ENCODE measurements at regions of chr6 and their contacts with region 1.

Region 1: DNA sequence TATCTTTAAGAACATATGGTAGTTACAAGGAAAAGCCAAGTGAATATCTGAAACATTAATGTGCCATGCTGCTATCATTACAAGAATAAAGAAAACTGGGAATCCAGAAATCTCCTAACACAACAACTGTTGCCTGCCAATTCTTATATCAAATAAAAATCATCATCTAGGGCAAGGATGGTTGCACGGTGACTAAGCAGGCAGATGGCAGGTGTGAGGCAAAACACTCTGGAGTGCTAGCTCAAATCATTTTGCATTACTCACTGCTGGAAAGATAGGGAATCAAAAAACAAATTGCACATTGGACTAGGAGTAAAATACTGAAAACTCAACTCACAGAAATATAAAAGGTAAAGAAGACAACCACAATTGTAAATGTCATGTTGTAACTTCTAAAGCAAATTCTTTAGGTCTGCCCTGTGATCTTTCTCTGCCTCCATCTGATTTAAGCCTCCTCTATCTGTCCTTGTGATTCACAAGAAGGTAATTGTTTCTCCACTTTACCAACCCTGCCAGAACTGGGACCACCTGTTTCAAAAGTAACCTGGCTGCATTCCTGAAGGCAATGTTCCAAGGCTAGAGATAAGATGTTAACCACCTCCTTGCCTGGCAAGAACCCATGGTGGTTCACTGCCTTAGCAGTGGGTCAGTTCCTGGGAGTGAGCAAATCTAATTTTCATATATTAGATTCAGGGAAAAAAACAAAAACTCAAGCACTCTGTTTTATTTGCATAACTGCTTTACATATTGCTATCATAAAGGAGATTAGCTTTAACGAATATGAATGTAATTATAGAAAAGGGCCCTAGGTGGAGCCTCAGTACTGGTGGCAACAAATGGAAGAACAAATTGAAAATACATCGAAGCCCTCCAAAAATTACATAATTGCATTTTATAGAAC is 33.1 kb upstream of the LCA5 start:
- DNase-seq: no peak
- ATAC-seq: peak; percentile 91
- H3K4me3 ChIP-seq: peak overlapping the region; percentile 1 to 18; a peak in 2 of 4 replicates
- H3K27ac ChIP-seq: peak overlapping the region; percentile 84
- H3K4me1 ChIP-seq: peaks cover 17% of the 10 kb centered on the region
- H3K27me3 ChIP-seq: no peaks in the 10 kb centered on the region
- CTCF ChIP-seq: peak; percentile 80

Region 2: DNA sequence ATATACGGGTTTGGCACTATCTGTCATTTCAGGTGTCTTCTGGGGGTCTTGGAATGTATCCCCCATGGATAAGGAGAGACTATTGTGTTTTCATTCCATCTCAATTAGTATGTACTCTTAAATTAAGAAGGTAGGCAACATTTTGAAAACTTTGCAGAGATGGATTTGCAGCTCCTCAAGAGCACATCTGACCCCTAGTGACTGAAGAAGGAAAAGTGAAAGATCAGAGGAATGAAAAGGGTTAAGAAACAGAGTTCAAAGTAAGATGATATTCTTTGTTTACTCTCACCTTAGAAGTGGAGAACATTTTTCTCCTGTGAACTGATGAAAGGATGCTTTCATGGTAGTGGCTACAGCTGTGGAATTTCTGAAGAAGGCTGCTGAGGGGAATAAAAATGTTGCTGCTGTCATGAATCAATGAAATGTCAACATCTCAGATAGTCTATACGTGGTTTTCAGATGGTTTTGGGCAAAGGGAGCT is 102.3 kb after region 1 on chr6:
- CTCF ChIA-PET with region 1: interaction called, 11 read pairs
- POLR2A ChIA-PET with region 1: no interaction called
- in situ Hi-C with region 1: no loop called
- intact Hi-C with region 1: loop called (anchors 2 kb)
- DNase-seq: peak; percentile 8
- ATAC-seq: peak; percentile 79; the same call in 1 of the 2 replicates
- H3K4me3 ChIP-seq: no peak overlapping the region
- H3K27ac ChIP-seq: peak overlapping the region; percentile 69
- H3K4me1 ChIP-seq: peaks cover 15% of the 10 kb centered on the region
- H3K27me3 ChIP-seq: no peaks in the 10 kb centered on the region
- CTCF ChIP-seq: peak; percentile 73; the same call in 1 of the 2 replicates

Region 3: DNA sequence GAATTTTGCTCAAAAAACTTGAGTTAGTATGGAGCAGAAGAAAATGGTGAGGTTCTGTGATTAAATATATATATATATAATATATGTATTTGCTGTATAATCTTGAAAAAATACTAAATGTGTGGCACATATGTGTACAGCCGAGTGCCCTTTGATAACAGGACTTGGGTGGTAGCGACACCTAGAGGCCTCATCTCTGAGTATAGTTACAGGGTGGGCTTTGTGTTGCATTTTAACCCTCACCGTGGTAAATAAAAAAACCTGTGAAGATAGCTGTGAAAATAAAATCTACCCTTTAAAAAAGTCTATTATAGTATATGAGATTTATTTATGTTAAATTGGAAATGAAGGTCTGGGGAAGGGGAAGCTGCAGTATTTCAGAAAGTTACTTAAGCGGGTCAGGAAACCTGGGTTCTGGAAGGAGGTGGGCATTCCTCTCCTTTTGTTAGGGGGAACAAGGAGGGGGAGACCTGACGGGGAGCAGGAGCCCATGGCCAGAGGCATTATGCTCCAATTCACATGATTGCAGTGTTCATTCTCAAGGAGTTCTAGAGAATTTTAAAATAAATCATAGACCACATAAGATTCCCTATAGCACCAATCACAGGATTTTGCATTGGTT is 143.4 kb after region 1 on chr6:
- CTCF ChIA-PET with region 1: no interaction called
- POLR2A ChIA-PET with region 1: no interaction called
- in situ Hi-C with region 1: no loop called
- intact Hi-C with region 1: loop called (anchors 5 kb)
- DNase-seq: no peak
- ATAC-seq: peak; percentile 85
- H3K4me3 ChIP-seq: no peak overlapping the region
- H3K27ac ChIP-seq: peak overlapping the region; percentile 42
- H3K4me1 ChIP-seq: no peaks in the 10 kb centered on the region
- H3K27me3 ChIP-seq: no peaks in the 10 kb centered on the region
- CTCF ChIP-seq: peak; percentile 79

Region 4: GRCh38 chr6:79813854-79814709 is 243.7 kb after region 1 on chr6:
- CTCF ChIA-PET with region 1: no interaction called
- POLR2A ChIA-PET with region 1: no interaction called
- in situ Hi-C with region 1: no loop called
- intact Hi-C with region 1: loop called (anchors 2 kb)
- DNase-seq: peak; percentile 52
- ATAC-seq: peak; percentile 94
- H3K4me3 ChIP-seq: no peak overlapping the region
- H3K27ac ChIP-seq: no peak overlapping the region; the same call in 1 of the 2 replicates
- H3K4me1 ChIP-seq: 0 out of 2 replicates have a peak, but pooled peaks cover 5% of the 10 kb centered on the region
- H3K27me3 ChIP-seq: no peaks in the 10 kb centered on the region
- CTCF ChIP-seq: peak; percentile 90

Region 5: GRCh38 chr6:79869600-79870084 is 299.3 kb after region 1 on chr6:
- CTCF ChIA-PET with region 1: interaction called, 6 read pairs
- POLR2A ChIA-PET with region 1: no interaction called
- in situ Hi-C with region 1: no loop called
- intact Hi-C with region 1: loop called (anchors 10 kb)
- DNase-seq: no peak
- ATAC-seq: peak; percentile 100
- H3K4me3 ChIP-seq: peak overlapping the region; percentile 8 to 43; a peak in 3 of 4 replicates
- H3K27ac ChIP-seq: peak overlapping the region; percentile 40
- H3K4me1 ChIP-seq: peaks cover 6% of the 10 kb centered on the region
- H3K27me3 ChIP-seq: peaks cover 1% of the 10 kb centered on the region
- CTCF ChIP-seq: peak; percentile 98